ENCODE measurements at regions of chr1 and their contacts with region 1.

Region 1: GRCh38 chr1:47262787-47263413 is 30.9 kb upstream of the TAL1 start:
- DNase-seq: peak; percentile 55
- H3K4me3 Mint-ChIP-seq: no peak overlapping the region
- H3K27ac Mint-ChIP-seq: no peak overlapping the region
- H3K4me1 Mint-ChIP-seq: no peaks in the 10 kb centered on the region
- H3K27me3 Mint-ChIP-seq: no peaks in the 10 kb centered on the region

Region 2: DNA sequence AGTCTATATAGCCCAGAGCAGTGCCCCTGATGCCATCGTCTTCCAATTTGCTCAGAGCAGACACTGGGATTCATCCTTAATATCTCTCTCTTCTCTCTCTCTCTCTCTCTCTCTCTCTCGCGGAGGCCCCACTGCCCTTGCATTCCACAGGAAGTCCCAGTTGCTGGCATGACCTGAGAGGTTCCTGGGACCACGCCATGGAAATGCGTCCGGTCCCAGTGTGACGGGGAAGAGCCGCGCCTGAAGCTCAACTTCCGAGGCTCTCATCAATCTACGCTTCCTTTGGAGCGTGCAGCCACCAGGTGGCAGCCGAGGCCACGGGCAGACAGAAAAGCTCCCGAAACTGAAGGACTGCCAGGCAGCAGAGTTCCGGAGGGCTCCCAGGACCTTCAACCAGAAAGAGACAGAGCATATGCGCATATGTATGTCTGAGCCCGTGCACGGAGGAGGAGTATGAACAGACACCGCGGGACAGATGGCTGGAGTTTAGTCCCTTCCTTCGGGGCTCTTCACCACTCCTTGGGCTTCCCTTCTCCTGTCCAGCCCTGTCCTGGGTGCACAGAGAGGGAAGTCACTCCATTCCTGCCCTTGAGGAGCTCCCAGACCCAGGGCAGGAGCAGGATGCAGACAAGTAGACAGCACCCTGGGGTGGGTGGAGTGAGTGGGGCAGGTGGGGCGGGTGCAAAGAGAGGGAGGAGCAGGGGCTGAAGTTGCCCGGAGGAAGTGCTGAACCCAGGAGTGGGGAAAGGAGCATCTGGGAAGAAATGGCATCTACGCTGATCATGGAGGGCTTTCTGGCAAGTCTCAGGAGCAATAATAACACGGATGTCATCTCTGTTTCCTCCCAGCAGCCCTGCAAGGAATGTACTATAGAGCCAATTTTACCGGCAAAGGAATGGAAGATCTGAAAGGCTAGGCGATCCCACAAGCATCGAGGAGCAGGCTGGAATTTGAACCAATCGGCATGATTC is 83.6 kb before region 1 on chr1:
- CTCF ChIA-PET with region 1: interaction called, 71 read pairs
- POLR2A ChIA-PET with region 1: interaction called, 6 read pairs
- DNase-seq: peak; percentile 86
- H3K4me3 Mint-ChIP-seq: peak overlapping the region; percentile 74
- H3K27ac Mint-ChIP-seq: peak overlapping the region; percentile 41
- H3K4me1 Mint-ChIP-seq: peaks cover 8% of the 10 kb centered on the region
- H3K27me3 Mint-ChIP-seq: peaks cover 19% of the 10 kb centered on the region

Region 3: DNA sequence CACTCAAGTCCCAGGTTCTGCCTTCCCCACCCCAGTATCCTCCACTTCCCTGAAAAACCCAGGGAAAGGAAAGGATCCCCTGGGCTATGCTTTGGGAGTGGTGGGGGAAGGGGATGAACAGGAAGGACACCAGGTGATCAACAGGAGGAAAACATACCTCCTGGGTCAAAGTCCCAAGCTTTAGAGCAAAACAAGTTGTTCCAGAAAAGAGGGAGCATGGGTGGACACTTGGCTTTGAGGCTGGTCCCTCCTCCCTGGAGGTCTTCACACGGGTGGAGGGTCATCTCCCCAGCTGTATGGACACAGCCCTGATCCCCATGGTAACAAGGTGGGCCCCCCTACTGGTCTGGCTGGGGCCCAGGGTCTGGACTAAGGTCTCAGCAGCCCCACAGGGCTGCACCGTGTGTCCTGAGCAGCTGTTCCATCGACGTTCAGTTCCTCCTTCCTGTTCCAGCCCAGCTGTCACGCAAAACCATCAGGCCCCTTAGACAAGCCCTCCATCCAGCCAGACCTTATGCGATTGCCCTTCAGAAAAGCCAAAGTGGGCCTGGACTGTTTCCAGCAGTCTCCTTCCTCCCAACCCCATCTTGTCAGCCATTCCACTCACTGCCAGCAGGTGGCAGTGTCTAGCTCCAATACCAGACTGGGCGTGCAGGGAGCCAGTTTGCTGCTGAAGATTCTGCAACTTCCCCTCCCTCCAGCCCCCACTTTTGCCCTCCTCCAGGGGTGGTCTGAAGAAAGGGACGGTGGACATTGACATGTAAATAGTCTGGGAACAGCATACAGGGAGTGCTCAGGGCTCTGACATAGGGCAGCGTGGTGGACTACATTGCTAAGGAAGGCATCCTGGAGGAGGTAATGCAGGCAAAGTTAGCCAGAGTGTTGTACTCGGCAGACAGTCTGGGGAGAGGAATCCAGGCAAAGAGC is 70.2 kb before region 1 on chr1:
- CTCF ChIA-PET with region 1: interaction called, 143 read pairs
- POLR2A ChIA-PET with region 1: interaction called, 3 read pairs
- DNase-seq: peak; percentile 75
- H3K4me3 Mint-ChIP-seq: no peak overlapping the region
- H3K27ac Mint-ChIP-seq: no peak overlapping the region
- H3K4me1 Mint-ChIP-seq: no peaks in the 10 kb centered on the region
- H3K27me3 Mint-ChIP-seq: peaks cover 8% of the 10 kb centered on the region

Region 4: GRCh38 chr1:47252369-47252768 is 10.5 kb before region 1 on chr1:
- CTCF ChIA-PET with region 1: interaction called, 32 read pairs
- POLR2A ChIA-PET with region 1: interaction called, 3 read pairs
- DNase-seq: no peak
- H3K4me3 Mint-ChIP-seq: no peak overlapping the region
- H3K27ac Mint-ChIP-seq: no peak overlapping the region
- H3K4me1 Mint-ChIP-seq: no peaks in the 10 kb centered on the region
- H3K27me3 Mint-ChIP-seq: no peaks in the 10 kb centered on the region

Region 5: GRCh38 chr1:47276850-47277249 is 13.9 kb after region 1 on chr1:
- CTCF ChIA-PET with region 1: interaction called, 11 read pairs
- POLR2A ChIA-PET with region 1: no interaction called
- DNase-seq: no peak
- H3K4me3 Mint-ChIP-seq: no peak overlapping the region
- H3K27ac Mint-ChIP-seq: peak overlapping the region; percentile 3
- H3K4me1 Mint-ChIP-seq: peaks cover 12% of the 10 kb centered on the region
- H3K27me3 Mint-ChIP-seq: no peaks in the 10 kb centered on the region

Region 6: GRCh38 chr1:47313915-47314664 is 51.2 kb after region 1 on chr1 and contains the start of gene STIL:
- CTCF ChIA-PET with region 1: interaction called, 10 read pairs
- POLR2A ChIA-PET with region 1: interaction called, 3 read pairs
- DNase-seq: peak; percentile 99
- H3K4me3 Mint-ChIP-seq: peak within 1 kb of the TSS; percentile 94
- H3K27ac Mint-ChIP-seq: peak within 1 kb of the TSS; percentile 94
- H3K4me1 Mint-ChIP-seq: peaks cover 33% of the 10 kb centered on the region
- H3K27me3 Mint-ChIP-seq: no peaks in the 10 kb centered on the region
- total RNA-seq, gene STIL: 40.4 to 40.8 TPM

Measured in activated CD4-positive, alpha-beta memory T cell treated with anti-CD3 and anti-CD28 coated beads, Interleukin-2, amount 10 ng/mL, durations not matched to agents 7 days and 5 days (primary cell).